ENCODE measurements at regions of chr14 and their contacts with region 1.

Region 1: DNA sequence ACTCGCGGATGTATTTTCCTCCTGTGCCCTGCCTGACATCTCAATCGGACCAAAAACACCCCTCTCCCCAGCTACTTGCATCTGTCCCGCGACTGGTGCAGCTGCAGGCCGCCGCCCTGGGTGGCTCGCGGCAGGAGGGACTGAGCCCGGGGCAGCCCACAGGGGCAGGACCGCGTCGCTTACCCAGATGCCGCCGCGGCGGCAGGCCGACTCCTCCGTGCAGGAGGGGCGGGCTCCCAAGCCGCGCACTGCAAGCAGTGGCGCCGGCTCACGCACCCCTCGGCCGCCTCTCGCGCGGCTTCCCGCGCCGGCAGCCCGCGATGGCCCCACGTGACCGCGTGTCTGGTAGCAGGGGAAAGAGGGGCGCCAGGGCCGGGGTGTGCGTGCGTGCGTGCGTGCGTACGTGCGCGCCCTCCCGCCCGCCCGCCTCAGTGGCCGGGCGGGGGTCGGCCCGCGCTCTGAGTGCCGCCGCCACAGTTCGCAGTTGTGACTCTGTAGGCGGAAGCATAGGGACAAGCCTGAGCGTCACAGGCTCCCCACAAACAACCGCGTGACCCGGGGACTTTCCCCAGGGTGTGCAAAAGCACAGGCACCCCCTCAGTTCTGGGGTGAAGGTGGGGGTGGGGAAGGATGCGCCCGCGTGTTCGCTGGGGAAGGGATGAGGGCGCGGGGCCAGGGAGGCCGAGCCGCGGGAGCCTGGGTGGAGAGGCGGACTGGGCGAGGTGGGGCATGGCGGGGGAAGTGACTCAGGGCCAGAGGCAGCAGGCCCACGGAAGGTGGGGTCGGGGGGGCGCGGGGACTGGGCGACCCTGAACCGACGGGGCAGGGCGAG is at the start of gene ZBTB25:
- DNase-seq: peak; percentile 96
- H3K4me3 Mint-ChIP-seq: peak within 1 kb of the TSS; percentile 96
- H3K27ac Mint-ChIP-seq: peak within 1 kb of the TSS; percentile 100
- H3K4me1 Mint-ChIP-seq: peaks cover 68% of the 10 kb centered on the region
- H3K27me3 Mint-ChIP-seq: peaks cover 2% of the 10 kb centered on the region
- total RNA-seq, gene ZBTB25: 18.6 and 19.6 TPM in 2 replicates

Region 2: GRCh38 chr14:63863004-63863403 is 640.7 kb before region 1 on chr14:
- intact Hi-C with region 1: loop called (anchors 5 kb)
- DNase-seq: no peak
- H3K4me3 Mint-ChIP-seq: no peak overlapping the region
- H3K27ac Mint-ChIP-seq: peak overlapping the region; percentile 74
- H3K4me1 Mint-ChIP-seq: peaks cover 76% of the 10 kb centered on the region
- H3K27me3 Mint-ChIP-seq: no peaks in the 10 kb centered on the region

Region 3: DNA sequence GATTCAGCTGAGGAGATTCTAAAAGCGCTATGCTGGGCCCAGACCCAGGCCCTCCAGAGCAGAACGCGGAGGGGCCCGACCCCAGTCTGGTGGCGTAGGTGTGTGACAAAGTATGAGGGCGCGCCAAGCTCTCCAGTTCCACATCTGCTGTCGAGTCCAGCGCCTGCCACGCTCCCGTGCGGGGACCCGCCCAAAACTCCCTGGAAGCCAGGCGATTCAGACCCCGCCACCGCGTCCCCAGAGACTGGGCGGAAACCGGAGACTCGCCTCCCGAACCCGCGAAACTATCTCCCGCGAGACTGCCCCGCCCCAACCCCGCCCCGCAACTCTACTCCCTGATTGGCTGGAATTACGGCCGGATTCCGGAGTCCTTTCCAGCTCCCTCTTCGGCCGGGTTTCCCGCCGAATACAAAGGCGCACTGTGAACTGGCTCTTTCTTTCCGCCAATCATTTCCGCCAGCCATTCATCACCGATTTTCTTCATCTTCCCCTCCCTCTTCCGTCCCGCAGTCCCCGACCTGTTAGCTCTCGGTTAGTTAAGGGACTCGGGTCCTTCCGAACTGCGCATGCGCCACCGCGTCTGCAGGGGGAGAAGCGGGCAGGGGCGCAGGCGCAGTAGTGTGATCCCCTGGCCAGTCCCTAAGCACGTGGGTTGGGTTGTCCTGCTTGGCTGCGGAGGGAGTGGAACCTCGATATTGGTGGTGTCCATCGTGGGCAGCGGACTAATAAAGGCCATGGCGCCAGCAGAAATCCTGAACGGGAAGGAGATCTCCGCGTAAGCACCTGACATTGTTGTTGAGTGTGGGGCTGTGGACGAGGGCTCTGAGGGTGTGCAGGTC is 115.8 kb before region 1 on chr14 and contains the start of gene MTHFD1:
- intact Hi-C with region 1: loop called (anchors 1 kb)
- DNase-seq: peak; percentile 96
- H3K4me3 Mint-ChIP-seq: peak within 1 kb of the TSS; percentile 97
- H3K27ac Mint-ChIP-seq: peak within 1 kb of the TSS; percentile 90
- H3K4me1 Mint-ChIP-seq: peaks cover 29% of the 10 kb centered on the region
- H3K27me3 Mint-ChIP-seq: no peaks in the 10 kb centered on the region
- total RNA-seq, gene MTHFD1: 241 and 244 TPM in 2 replicates

Region 4: DNA sequence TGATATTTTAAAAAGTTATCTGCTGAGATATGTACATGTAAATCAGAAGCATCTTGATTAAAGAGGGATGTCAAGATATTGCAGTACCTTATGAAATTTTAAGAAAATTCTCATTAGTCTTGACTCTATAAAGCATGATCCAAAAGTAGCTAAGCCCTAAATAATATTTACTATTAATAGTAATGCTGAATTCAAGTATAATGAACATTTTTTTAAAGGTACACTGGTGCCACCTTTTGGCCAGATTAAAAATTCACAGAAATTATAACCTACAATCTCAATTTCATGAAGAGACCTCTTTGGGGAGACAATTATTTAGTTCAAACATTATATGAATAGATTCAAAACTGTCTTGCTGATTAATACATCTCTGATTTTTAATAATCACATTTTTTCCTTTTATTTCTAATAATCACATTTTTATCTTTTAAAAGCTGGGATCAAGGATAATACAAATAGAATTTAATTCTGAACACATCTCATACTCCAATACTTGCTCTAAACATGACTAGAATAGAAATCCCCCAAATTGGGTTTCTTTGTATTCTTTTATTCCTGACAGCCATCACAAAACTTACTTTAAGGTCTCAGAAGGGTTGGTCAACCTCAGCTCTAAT is 25.0 kb before region 1 on chr14:
- intact Hi-C with region 1: loop called (anchors 2 kb)
- DNase-seq: no peak
- H3K4me3 Mint-ChIP-seq: no peak overlapping the region
- H3K27ac Mint-ChIP-seq: no peak overlapping the region
- H3K4me1 Mint-ChIP-seq: peaks cover 9% of the 10 kb centered on the region
- H3K27me3 Mint-ChIP-seq: no peaks in the 10 kb centered on the region

Region 5: DNA sequence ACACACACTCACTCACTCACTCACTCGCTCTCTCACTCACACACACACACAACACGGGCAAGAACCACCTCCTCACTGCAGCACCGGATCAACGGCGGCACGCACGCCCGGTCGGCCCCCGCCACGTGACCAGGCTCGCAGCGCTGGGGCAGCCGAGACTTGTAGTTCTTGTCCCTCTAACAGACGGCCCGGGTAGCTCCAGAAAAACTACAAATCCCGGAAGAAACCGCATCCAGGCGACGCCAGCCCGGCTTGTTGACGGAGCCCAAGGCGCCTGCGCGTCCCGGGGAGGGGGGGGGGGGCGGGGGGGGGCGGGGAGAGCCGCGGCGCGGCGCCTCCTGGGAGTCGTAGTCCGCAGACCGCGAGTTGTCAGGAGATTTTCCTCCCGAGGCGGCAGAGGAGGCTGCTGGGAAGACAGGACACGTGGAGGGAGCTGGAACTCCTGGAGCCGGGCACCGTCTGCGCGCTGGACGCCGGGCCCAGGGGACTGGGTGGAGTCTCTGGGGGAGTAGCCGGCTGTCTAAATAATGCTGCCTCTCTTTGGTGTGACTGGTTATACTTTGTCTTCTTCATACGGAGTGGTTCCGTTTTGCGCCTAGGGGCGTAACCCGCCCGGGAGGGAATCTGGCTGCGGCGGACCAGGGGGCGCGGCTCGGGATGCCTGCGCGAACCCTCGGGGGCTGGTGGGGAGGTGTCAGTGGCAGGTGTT is 598.9 kb after region 1 on chr14 and contains the start of gene MAX:
- intact Hi-C with region 1: loop called (anchors 5 kb)
- DNase-seq: peak; percentile 98
- H3K4me3 Mint-ChIP-seq: peak within 1 kb of the TSS; percentile 95
- H3K27ac Mint-ChIP-seq: peak within 1 kb of the TSS; percentile 95
- H3K4me1 Mint-ChIP-seq: peaks cover 33% of the 10 kb centered on the region
- H3K27me3 Mint-ChIP-seq: peaks cover 6% of the 10 kb centered on the region
- total RNA-seq, gene MAX: 135 and 137 TPM in 2 replicates

Measured in activated T-helper 1 cell treated with anti-CD3 and anti-CD28 coated beads, Interleukin-12 subunit alpha, Interleukin-12 subunit beta, Interleukin-2, Interleukin-4 antibody, amounts not matched to agents 30 ng/mL and 10 ng/mL and 1 ng/mL, durations not matched to agents 14 hours and 24 hours and 36 hours (primary cell).